CD4-positive, alpha-beta memory T cell (primary cell): ENCODE measurements at regions of chr16 and their contacts with region 1.

Region 1: GRCh38 chr16:30922960-30923535 is 324 bp upstream of the FBXL19 start:
- DNase-seq: peak; percentile 95 to 98 (median 97)
- H3K4me3 ChIP-seq: peak overlapping the region; percentile 73 to 92
- H3K4me3 Mint-ChIP-seq: peak overlapping the region; percentile 95 to 100 (median 99)
- H3K27ac ChIP-seq: peak overlapping the region; percentile 90
- H3K27ac Mint-ChIP-seq: peak overlapping the region; percentile 98 to 100 (median 99)
- H3K4me1 ChIP-seq: peaks cover 12% of the 10 kb centered on the region
- H3K4me1 Mint-ChIP-seq: peaks cover 7 to 33% (median 17%) of the 10 kb centered on the region in 4 donors
- H3K27me3 ChIP-seq: no peaks in the 10 kb centered on the region
- H3K27me3 Mint-ChIP-seq: no peaks in the 10 kb centered on the region

Region 2: DNA sequence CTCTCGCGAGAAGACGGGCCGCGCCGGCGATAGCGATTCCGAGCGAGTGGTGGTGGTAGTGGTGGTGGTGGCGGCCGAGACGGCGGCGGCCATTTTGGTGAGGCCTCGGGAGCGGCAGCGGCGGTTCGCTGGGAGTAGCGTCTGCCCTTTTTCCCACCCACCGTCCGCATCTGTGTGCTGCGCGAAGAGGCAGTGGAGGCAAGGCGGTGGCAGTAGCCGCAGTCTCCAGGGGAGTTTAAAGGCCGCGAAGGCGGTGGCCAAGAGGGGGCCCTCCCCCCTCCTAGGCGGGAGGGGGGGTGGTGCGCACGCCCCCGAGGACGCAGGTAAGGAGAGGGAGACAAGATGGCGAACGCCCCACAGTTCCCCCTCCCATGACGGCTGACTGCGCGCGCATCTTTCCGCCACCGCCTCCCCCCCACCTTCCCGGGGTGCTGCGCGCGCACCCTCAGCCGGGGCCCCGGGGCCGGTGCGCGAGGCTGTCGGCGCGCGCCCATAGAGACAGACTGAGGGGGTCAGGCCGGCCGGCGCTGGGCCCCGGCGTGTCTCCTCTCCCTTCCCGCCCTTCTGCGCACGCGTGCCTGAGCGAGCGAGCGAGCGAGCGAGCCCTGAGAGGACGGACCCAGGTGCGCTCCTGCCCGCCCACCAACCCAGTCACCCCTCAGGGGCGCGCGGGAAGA is 224.8 kb before region 1 on chr16:
- CTCF ChIA-PET with region 1: no interaction called
- POLR2A ChIA-PET with region 1: interaction called, 3 read pairs
- intact Hi-C with region 1: loop called (anchors 1 kb)
- DNase-seq: peak; percentile 99 to 100 (median 100)
- H3K4me3 ChIP-seq: peak overlapping the region; percentile 61 to 71
- H3K4me3 Mint-ChIP-seq: peak overlapping the region; percentile 95 to 99 (median 96)
- H3K27ac ChIP-seq: peak overlapping the region; percentile 100
- H3K27ac Mint-ChIP-seq: peak overlapping the region; percentile 100
- H3K4me1 ChIP-seq: peaks cover 36% of the 10 kb centered on the region
- H3K4me1 Mint-ChIP-seq: peaks cover 22 to 44% (median 32%) of the 10 kb centered on the region in 4 donors
- H3K27me3 ChIP-seq: no peaks in the 10 kb centered on the region
- H3K27me3 Mint-ChIP-seq: peaks cover 0 to 3% of the 10 kb centered on the region in 2 donors

Region 3: GRCh38 chr16:30813821-30814189 is 109.2 kb before region 1 on chr16:
- CTCF ChIA-PET with region 1: no interaction called
- POLR2A ChIA-PET with region 1: interaction called, 3 read pairs
- intact Hi-C with region 1: loop called (anchors 1 kb)
- DNase-seq: no peak
- H3K4me3 ChIP-seq: peak overlapping the region; percentile 61 to 64
- H3K4me3 Mint-ChIP-seq: peak overlapping the region; percentile 88 to 93 (median 89)
- H3K27ac ChIP-seq: peak overlapping the region; percentile 57
- H3K27ac Mint-ChIP-seq: peak overlapping the region; percentile 81 to 91 (median 90)
- H3K4me1 ChIP-seq: peaks cover 13% of the 10 kb centered on the region
- H3K4me1 Mint-ChIP-seq: peaks cover 8 to 17% (median 12%) of the 10 kb centered on the region in 4 donors
- H3K27me3 ChIP-seq: no peaks in the 10 kb centered on the region
- H3K27me3 Mint-ChIP-seq: no peaks in the 10 kb centered on the region

Region 4: GRCh38 chr16:30893744-30894539 is 29.1 kb before region 1 on chr16 and contains the start of gene BCL7C:
- CTCF ChIA-PET with region 1: no interaction called
- POLR2A ChIA-PET with region 1: interaction called, 6 read pairs
- intact Hi-C with region 1: loop called (anchors 1 kb)
- DNase-seq: peak; percentile 63 to 82 (median 67)
- H3K4me3 ChIP-seq: peak within 1 kb of the TSS; percentile 52 to 75
- H3K4me3 Mint-ChIP-seq: peak within 1 kb of the TSS; percentile 85 to 95 (median 90)
- H3K27ac ChIP-seq: peak within 1 kb of the TSS; percentile 79
- H3K27ac Mint-ChIP-seq: peak within 1 kb of the TSS; percentile 85 to 97 (median 93)
- H3K4me1 ChIP-seq: peaks cover 35% of the 10 kb centered on the region
- H3K4me1 Mint-ChIP-seq: peaks cover 29 to 55% (median 43%) of the 10 kb centered on the region in 4 donors
- H3K27me3 ChIP-seq: no peaks in the 10 kb centered on the region
- H3K27me3 Mint-ChIP-seq: no peaks in the 10 kb centered on the region
- total RNA-seq, gene BCL7C: 25.5 to 27.3 TPM

Region 5: GRCh38 chr16:30910427-30911029 is 12.5 kb before region 1 on chr16:
- CTCF ChIA-PET with region 1: no interaction called
- POLR2A ChIA-PET with region 1: no interaction called
- intact Hi-C with region 1: no loop called
- DNase-seq: no peak
- H3K4me3 ChIP-seq: no peak overlapping the region
- H3K4me3 Mint-ChIP-seq: no peak overlapping the region
- H3K27ac ChIP-seq: no peak overlapping the region
- H3K27ac Mint-ChIP-seq: no peak overlapping the region
- H3K4me1 ChIP-seq: peaks cover 14% of the 10 kb centered on the region
- H3K4me1 Mint-ChIP-seq: peaks cover 8 to 18% (median 13%) of the 10 kb centered on the region in 4 donors
- H3K27me3 ChIP-seq: no peaks in the 10 kb centered on the region
- H3K27me3 Mint-ChIP-seq: no peaks in the 10 kb centered on the region

Region 6: GRCh38 chr16:30957456-30958174 is 34.6 kb after region 1 on chr16 and contains the start of gene SETD1A:
- CTCF ChIA-PET with region 1: interaction called, 3 read pairs
- POLR2A ChIA-PET with region 1: no interaction called
- intact Hi-C with region 1: loop called (anchors 1 kb)
- DNase-seq: peak; percentile 97 to 98 (median 98)
- H3K4me3 ChIP-seq: peak within 1 kb of the TSS; percentile 85 to 95
- H3K4me3 Mint-ChIP-seq: peak within 1 kb of the TSS; percentile 95 to 99 (median 96)
- H3K27ac ChIP-seq: peak within 1 kb of the TSS; percentile 92
- H3K27ac Mint-ChIP-seq: peak within 1 kb of the TSS; percentile 98 to 100 (median 99)
- H3K4me1 ChIP-seq: peaks cover 30% of the 10 kb centered on the region
- H3K4me1 Mint-ChIP-seq: peaks cover 13 to 43% (median 31%) of the 10 kb centered on the region in 4 donors
- H3K27me3 ChIP-seq: no peaks in the 10 kb centered on the region
- H3K27me3 Mint-ChIP-seq: peaks cover 0 to 4% of the 10 kb centered on the region in 2 donors
- total RNA-seq, gene SETD1A: 32.1 to 33.2 TPM

Region 7: DNA sequence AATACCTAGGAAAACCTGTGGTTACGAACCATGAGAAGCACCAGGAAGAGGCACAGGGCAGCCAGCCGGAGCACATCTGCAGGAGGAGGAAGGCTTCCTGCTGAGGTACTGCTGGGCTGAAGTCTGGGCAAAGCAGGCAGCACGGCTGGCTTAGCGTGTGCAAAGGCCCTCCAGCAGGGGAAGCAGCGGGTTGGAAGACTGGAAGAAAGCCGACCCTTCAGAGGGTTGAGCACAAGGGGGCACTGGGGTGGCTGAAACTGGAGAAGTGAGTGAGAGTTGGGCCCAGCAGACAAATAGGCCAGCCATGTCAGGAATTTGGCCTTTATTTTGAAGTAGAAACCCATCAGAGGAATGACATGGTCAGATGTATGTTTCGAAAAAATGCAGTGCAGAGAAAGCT is 49.8 kb after region 1 on chr16:
- CTCF ChIA-PET with region 1: no interaction called
- POLR2A ChIA-PET with region 1: no interaction called
- intact Hi-C with region 1: no loop called
- DNase-seq: no peak
- H3K4me3 ChIP-seq: no peak overlapping the region
- H3K4me3 Mint-ChIP-seq: no peak overlapping the region
- H3K27ac ChIP-seq: no peak overlapping the region
- H3K27ac Mint-ChIP-seq: peak overlapping the region in 3 of 7 donors; percentile 40 to 81 (median 46)
- H3K4me1 ChIP-seq: no peaks in the 10 kb centered on the region
- H3K4me1 Mint-ChIP-seq: peaks cover 0 to 14% (median 3%) of the 10 kb centered on the region in 4 donors
- H3K27me3 ChIP-seq: no peaks in the 10 kb centered on the region
- H3K27me3 Mint-ChIP-seq: no peaks in the 10 kb centered on the region

Region 8: GRCh38 chr16:31868691-31869167 is 945.7 kb after region 1 on chr16:
- CTCF ChIA-PET with region 1: no interaction called
- POLR2A ChIA-PET with region 1: interaction called, 3 read pairs
- intact Hi-C with region 1: loop called (anchors 2 kb)
- DNase-seq: peak; percentile 74 to 85 (median 78)
- H3K4me3 ChIP-seq: peak overlapping the region; percentile 65 to 67
- H3K4me3 Mint-ChIP-seq: peak overlapping the region; percentile 71 to 84 (median 78)
- H3K27ac ChIP-seq: peak overlapping the region; percentile 71
- H3K27ac Mint-ChIP-seq: peak overlapping the region; percentile 74 to 96 (median 92)
- H3K4me1 ChIP-seq: peaks cover 44% of the 10 kb centered on the region
- H3K4me1 Mint-ChIP-seq: peaks cover 31 to 50% (median 38%) of the 10 kb centered on the region in 4 donors
- H3K27me3 ChIP-seq: no peaks in the 10 kb centered on the region
- H3K27me3 Mint-ChIP-seq: no peaks in the 10 kb centered on the region